ENCODE measurements at regions of chr7 and their contacts with region 1.

Region 1: DNA sequence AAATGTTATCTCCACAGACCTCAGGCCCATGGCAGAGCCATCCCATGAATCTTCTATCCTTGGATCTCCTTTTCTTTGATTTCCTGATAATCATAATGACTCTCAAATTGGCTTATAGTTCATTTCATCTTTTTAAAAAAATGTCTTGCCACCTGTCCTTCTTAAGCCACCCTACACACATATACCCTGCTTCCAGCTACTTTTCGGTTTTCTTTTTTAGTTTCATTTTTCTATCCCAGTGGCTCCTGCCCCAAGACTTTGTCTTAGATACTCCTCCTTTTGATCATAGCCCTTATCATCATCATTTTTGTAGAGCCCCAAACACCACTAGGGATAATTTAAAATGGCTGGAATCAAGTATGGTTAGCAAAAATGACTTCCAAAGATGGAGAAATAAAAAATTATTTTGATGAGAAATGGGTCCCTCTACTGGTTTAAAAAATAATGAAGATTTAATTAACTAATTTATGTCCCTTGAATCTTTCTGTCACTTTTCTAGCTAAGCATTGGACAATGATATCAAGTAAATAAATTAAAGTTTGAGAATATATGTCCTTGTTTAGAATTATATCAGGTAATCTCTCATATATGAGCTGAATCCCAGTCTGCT is 277.3 kb upstream of the SEMA3D start:
- DNase-seq: no peak
- H3K4me3 ChIP-seq: no peak overlapping the region
- H3K4me3 Mint-ChIP-seq: no peak overlapping the region
- H3K27ac Mint-ChIP-seq: no peak overlapping the region
- H3K4me1 ChIP-seq: no peaks in the 10 kb centered on the region
- H3K4me1 Mint-ChIP-seq: no peaks in the 10 kb centered on the region
- H3K27me3 ChIP-seq: no peaks in the 10 kb centered on the region
- H3K27me3 Mint-ChIP-seq: peaks cover 6% of the 10 kb centered on the region
- CTCF ChIP-seq: peak in 1 of 2 experiments; percentile 22

Region 2: GRCh38 chr7:85186521-85187241 is 277.5 kb before region 1 on chr7 and contains the start of gene SEMA3D:
- CTCF ChIA-PET with region 1: no interaction called
- POLR2A ChIA-PET with region 1: no interaction called
- intact Hi-C with region 1: loop called (anchors 5 kb)
- DNase-seq: peak; percentile 33 to 56
- H3K4me3 ChIP-seq: peak within 1 kb of the TSS; percentile 21; the same call in 1 of the 2 replicates
- H3K4me3 Mint-ChIP-seq: peak within 1 kb of the TSS; percentile 64
- H3K27ac Mint-ChIP-seq: no peak within 1 kb of the TSS
- H3K4me1 ChIP-seq: no peaks in the 10 kb centered on the region
- H3K4me1 Mint-ChIP-seq: no peaks in the 10 kb centered on the region
- H3K27me3 ChIP-seq: no peaks in the 10 kb centered on the region
- H3K27me3 Mint-ChIP-seq: no peaks in the 10 kb centered on the region
- CTCF ChIP-seq: peak; percentile 26 to 35
- total RNA-seq, gene SEMA3D: 0.61 and 0.84 TPM in 2 replicates

Region 3: GRCh38 chr7:85851571-85852193 is 387.5 kb after region 1 on chr7:
- CTCF ChIA-PET with region 1: no interaction called
- POLR2A ChIA-PET with region 1: no interaction called
- intact Hi-C with region 1: no loop called
- DNase-seq: peak in 1 of 2 experiments; percentile 17
- H3K4me3 ChIP-seq: no peak overlapping the region
- H3K4me3 Mint-ChIP-seq: no peak overlapping the region
- H3K27ac Mint-ChIP-seq: no peak overlapping the region
- H3K4me1 ChIP-seq: no peaks in the 10 kb centered on the region
- H3K4me1 Mint-ChIP-seq: no peaks in the 10 kb centered on the region
- H3K27me3 ChIP-seq: no peaks in the 10 kb centered on the region
- H3K27me3 Mint-ChIP-seq: peaks cover 8% of the 10 kb centered on the region
- CTCF ChIP-seq: peak; percentile 32 to 36